SK-N-SH (cell line): ENCODE measurements at regions of chr7 and their contacts with region 1.

Region 1: DNA sequence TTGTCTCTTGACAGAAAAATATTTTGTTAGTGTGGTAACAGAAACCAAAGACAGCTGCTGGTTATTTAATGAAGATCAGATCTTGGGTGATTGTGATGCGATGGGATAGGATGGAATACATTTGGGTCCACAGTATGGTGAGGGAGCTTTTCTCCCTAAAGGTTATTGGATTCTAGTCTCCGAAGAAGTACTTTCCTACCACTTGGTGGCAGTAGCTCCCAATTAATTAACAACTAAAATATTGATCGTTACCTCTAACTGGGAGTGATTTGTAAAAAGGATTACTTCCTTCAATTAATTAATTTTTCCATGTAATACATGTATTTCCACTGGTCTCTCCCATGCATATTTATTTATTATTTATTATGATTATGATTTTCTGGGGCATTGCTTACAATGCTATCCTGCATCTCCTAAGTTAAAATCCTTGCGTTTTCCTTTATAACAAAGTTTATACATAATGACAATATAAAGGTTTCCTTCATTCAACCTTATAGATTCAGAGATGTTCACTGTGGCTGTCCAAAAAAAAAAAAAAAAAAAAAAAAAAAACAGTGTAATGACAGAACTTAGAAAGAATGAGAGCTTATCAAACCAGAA is 25.6 kb downstream of the TMEM196 start:
- DNase-seq: peak; percentile 47
- H3K4me3 ChIP-seq: no peak overlapping the region
- H3K27ac ChIP-seq: no peak overlapping the region
- H3K4me1 ChIP-seq: no peaks in the 10 kb centered on the region
- H3K27me3 ChIP-seq: no peaks in the 10 kb centered on the region; the same call in 1 of the 2 replicates
- CTCF ChIP-seq: peak; percentile 86
- EP300 ChIP-seq: no peak
- RAD21 ChIP-seq: peak; percentile 78

Region 2: DNA sequence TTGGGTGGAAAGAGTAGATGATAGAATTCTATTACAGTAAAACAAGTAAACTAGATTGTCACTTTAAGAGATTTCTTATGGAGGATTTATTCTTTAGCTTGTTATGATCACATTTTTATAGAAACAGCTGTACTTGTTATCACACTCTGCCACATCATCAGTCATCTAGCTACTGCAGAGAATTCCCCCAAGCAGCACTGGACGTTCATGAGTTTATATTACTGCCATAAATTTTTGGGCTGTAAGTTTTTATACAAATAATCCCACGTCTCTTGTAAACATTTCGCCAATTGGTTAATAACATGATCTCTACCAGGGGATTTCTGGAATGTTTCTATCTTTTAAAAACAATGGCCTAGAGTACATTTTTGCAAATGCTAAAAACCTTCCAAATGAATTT is 277.8 kb before region 1 on chr7:
- CTCF ChIA-PET with region 1: no interaction called
- POLR2A ChIA-PET with region 1: no interaction called
- DNase-seq: no peak
- H3K4me3 ChIP-seq: no peak overlapping the region
- H3K27ac ChIP-seq: no peak overlapping the region
- H3K4me1 ChIP-seq: no peaks in the 10 kb centered on the region
- H3K27me3 ChIP-seq: no peaks in the 10 kb centered on the region
- CTCF ChIP-seq: no peak
- EP300 ChIP-seq: no peak
- RAD21 ChIP-seq: no peak

Region 3: GRCh38 chr7:19713676-19714075 is 34.2 kb before region 1 on chr7:
- CTCF ChIA-PET with region 1: interaction called, 23 read pairs
- POLR2A ChIA-PET with region 1: no interaction called
- DNase-seq: peak; percentile 15
- H3K4me3 ChIP-seq: no peak overlapping the region
- H3K27ac ChIP-seq: no peak overlapping the region
- H3K4me1 ChIP-seq: peaks cover 0 to 4% of the 10 kb centered on the region in 2 experiments; a peak in 1 of 4 replicates
- H3K27me3 ChIP-seq: no peaks in the 10 kb centered on the region
- CTCF ChIP-seq: peak; percentile 86
- EP300 ChIP-seq: no peak
- RAD21 ChIP-seq: peak; percentile 70

Region 4: GRCh38 chr7:19762631-19763030 is 14.8 kb after region 1 on chr7:
- CTCF ChIA-PET with region 1: interaction called, 16 read pairs
- POLR2A ChIA-PET with region 1: no interaction called
- DNase-seq: no peak
- H3K4me3 ChIP-seq: no peak overlapping the region
- H3K27ac ChIP-seq: no peak overlapping the region
- H3K4me1 ChIP-seq: no peaks in the 10 kb centered on the region; a peak in 1 of 4 replicates
- H3K27me3 ChIP-seq: peaks cover 4% of the 10 kb centered on the region; the same call in 1 of the 2 replicates
- CTCF ChIP-seq: no peak
- EP300 ChIP-seq: no peak
- RAD21 ChIP-seq: no peak

Region 5: GRCh38 chr7:20172736-20173334 is 425.0 kb after region 1 on chr7:
- CTCF ChIA-PET with region 1: interaction called, 29 read pairs
- POLR2A ChIA-PET with region 1: no interaction called
- DNase-seq: peak; percentile 66
- H3K4me3 ChIP-seq: no peak overlapping the region
- H3K27ac ChIP-seq: no peak overlapping the region
- H3K4me1 ChIP-seq: no peaks in the 10 kb centered on the region
- H3K27me3 ChIP-seq: no peaks in the 10 kb centered on the region
- CTCF ChIP-seq: peak; percentile 67
- EP300 ChIP-seq: no peak
- RAD21 ChIP-seq: peak; percentile 78

Region 6: GRCh38 chr7:20647908-20648776 is 900.3 kb after region 1 on chr7:
- CTCF ChIA-PET with region 1: interaction called, 36 read pairs
- POLR2A ChIA-PET with region 1: no interaction called
- DNase-seq: peak; percentile 51
- H3K4me3 ChIP-seq: no peak overlapping the region
- H3K27ac ChIP-seq: no peak overlapping the region
- H3K4me1 ChIP-seq: no peaks in the 10 kb centered on the region
- H3K27me3 ChIP-seq: no peaks in the 10 kb centered on the region; the same call in 1 of the 2 replicates
- CTCF ChIP-seq: peak; percentile 44; the same call in 1 of the 2 replicates
- EP300 ChIP-seq: no peak
- RAD21 ChIP-seq: peak; percentile 66